GM10248 (cell line): ENCODE measurements at regions of chr6 and their contacts with region 1.

Region 1: DNA sequence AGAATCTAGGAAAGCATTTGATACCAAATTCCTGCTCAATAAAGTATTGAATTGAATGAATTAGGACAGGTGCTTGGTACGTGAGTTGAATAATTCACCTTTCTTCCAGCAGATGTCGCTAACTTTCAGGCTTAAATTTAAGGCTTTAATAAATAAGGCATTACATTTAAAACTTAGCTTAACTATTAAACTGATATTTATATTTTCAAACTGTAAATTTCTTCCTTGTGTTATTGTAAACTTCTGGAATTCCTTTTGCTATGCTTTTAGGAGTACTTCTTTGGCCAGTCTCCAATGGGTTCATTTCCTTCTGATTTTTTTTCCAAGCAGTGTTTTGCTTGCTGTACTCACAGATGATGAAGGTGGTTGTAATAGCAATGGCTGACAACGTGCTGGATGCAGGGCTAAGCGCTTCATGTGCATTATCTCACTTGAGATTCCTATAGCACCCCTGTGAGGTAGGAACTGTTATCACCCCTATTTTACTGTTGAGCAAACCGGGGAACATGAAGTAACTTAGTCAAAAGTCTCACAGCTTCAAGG is 71.3 kb upstream of the SLC2A12 start:
- DNase-seq: no peak
- CTCF ChIP-seq: peak; percentile 73

Region 2: GRCh38 chr6:134074151-134075055 is 49.3 kb before region 1 on chr6:
- CTCF ChIA-PET with region 1: no interaction called
- POLR2A ChIA-PET with region 1: no interaction called
- DNase-seq: no peak
- CTCF ChIP-seq: no peak

Region 3: GRCh38 chr6:134103006-134103405 is 20.7 kb before region 1 on chr6:
- CTCF ChIA-PET with region 1: interaction called, 78 read pairs
- POLR2A ChIA-PET with region 1: no interaction called
- DNase-seq: no peak
- CTCF ChIP-seq: no peak

Region 4: GRCh38 chr6:134111062-134111677 is 12.6 kb before region 1 on chr6:
- CTCF ChIA-PET with region 1: interaction called, 78 read pairs
- POLR2A ChIA-PET with region 1: no interaction called
- DNase-seq: peak; percentile 74
- CTCF ChIP-seq: peak; percentile 89

Region 5: DNA sequence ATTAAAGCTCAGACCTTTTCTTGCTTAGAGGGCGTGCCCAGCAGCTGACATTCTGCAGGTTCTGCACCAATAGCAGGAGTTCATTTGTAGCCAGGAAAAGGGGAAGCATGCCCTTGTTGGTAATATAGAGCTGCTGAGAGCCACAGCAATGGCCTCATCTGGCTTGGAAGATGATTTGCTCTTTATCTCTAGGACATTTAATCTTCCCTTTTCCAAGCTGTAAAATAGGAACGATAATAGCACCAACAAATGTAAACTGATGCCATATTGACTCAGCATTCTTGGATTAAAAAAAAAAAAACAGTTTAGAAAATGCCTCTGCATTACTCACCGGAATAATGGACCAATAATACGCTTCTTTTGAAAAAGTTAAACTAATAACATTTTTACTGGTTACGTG is 22.0 kb after region 1 on chr6:
- CTCF ChIA-PET with region 1: interaction called, 23 read pairs
- POLR2A ChIA-PET with region 1: no interaction called
- DNase-seq: no peak
- CTCF ChIP-seq: no peak

Region 6: DNA sequence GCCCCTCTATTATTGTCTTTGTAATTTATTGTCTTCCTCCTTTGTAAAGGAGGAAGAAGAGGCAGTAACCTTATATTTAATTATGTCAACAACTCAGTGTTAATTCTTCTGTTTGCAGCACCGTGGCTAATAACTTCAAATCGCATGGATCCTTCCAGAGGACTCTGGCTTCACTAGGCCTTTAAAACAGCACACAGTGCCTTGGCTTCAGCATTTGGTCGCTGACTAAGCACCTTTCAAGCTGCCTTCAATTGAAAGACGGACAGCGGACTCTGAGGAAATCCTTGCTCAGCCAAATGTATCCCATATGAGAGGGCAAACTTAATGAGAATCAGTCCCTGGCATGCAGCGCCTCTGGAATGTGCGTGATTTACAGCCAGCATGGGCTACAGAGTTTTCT is 129.9 kb after region 1 on chr6:
- CTCF ChIA-PET with region 1: no interaction called
- POLR2A ChIA-PET with region 1: no interaction called
- DNase-seq: no peak
- CTCF ChIP-seq: no peak

Region 7: DNA sequence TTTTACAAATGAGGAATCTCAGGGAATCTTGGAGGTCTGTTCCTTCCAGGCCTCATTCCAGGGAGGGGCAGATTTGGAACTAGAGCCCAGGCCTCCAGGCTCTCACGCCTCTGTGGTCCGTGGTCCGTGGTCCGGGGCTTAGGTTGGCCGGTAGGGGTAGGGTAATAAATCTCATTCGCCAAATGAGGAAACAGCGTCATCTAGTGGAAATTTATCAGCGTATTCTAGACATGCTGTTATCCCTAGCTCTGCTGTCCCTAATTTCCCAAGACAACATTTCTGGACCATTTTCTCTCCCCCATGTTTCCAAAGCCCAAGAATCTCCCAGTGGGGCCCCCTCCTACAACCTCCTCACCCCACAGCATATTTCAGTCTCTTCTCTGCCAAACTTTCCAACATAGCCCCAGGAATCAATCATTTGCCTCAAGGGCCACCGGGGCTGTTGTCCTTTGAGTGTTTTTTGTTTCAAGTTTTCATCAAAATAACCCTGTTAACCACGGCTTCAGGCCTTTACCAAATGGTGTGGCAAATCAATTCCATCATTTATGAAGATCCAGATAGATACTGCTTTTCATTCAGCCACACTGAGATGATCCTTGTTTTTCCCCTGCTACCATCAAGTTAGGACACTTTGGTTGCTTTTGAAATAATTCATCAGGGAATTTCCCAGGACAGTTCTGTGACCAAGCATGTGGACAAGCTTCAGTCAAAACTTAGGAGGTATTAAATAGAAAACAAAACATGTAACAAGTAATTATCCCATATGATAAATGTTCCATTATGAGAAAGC is 699.4 kb after region 1 on chr6:
- CTCF ChIA-PET with region 1: interaction called, 14 read pairs
- POLR2A ChIA-PET with region 1: no interaction called
- DNase-seq: peak; percentile 65
- CTCF ChIP-seq: peak; percentile 70